Natural killer cell (primary cell): ENCODE measurements at regions of chr12 and their contacts with region 1.

Region 1: DNA sequence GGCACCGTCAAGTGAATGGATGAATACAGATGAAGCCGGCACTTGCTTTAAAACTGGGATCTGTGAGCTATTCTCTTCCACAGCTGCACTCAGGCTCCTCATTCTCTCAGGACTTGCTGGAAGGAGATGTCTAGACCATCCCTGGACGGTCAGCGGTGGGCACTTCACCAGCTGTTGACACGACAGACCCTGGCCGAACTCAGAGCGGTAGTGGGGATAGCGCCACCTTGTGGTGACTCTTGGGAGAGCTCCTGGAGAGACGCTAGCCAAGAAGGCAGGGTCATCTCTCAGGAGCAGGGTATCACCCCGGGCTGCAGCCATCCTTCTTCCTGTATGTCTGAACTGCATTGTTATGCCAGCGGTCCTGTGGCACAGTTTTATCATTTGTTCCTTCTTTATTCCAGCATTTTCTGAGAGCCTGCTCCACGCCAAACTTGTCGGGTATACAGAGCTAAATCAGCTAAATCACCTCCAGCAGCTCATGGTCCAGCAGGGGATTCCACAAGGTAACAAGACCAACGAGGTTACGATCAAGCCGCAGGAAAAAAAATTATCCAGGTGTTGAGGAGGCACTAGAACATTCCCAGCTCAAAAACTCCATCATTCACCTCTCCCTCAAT is 10.0 kb downstream of the WNT1 start:
- DNase-seq: peak; percentile 77 to 86
- ATAC-seq: peak; percentile 86 to 97 (median 90)
- H3K4me3 ChIP-seq: no peak overlapping the region
- H3K4me3 Mint-ChIP-seq: no peak overlapping the region
- H3K27ac ChIP-seq: no peak overlapping the region
- H3K27ac Mint-ChIP-seq: no peak overlapping the region
- H3K4me1 ChIP-seq: peaks cover 5% of the 10 kb centered on the region
- H3K4me1 Mint-ChIP-seq: peaks cover 5 to 8% of the 10 kb centered on the region in 2 donors
- H3K27me3 ChIP-seq: peaks cover 7% of the 10 kb centered on the region
- H3K27me3 Mint-ChIP-seq: peaks cover 35% of the 10 kb centered on the region in 2 donors
- CTCF ChIP-seq: peak; percentile 87

Region 2: GRCh38 chr12:48903982-48904411 is 84.1 kb before region 1 on chr12:
- intact Hi-C with region 1: loop called (anchors 5 kb)
- DNase-seq: peak; percentile 74 to 93
- ATAC-seq: peak; percentile 95 to 100 (median 99)
- H3K4me3 ChIP-seq: peak overlapping the region; percentile 9
- H3K4me3 Mint-ChIP-seq: peak overlapping the region; percentile 56
- H3K27ac ChIP-seq: no peak overlapping the region
- H3K27ac Mint-ChIP-seq: peak overlapping the region in 1 of 2 donors; percentile 83
- H3K4me1 ChIP-seq: peaks cover 14% of the 10 kb centered on the region
- H3K4me1 Mint-ChIP-seq: peaks cover 6 to 11% of the 10 kb centered on the region in 2 donors
- H3K27me3 ChIP-seq: no peaks in the 10 kb centered on the region
- H3K27me3 Mint-ChIP-seq: no peaks in the 10 kb centered on the region
- CTCF ChIP-seq: peak; percentile 84

Region 3: GRCh38 chr12:48954841-48955501 is 33.2 kb before region 1 on chr12:
- intact Hi-C with region 1: no loop called
- DNase-seq: no peak
- ATAC-seq: no peak
- H3K4me3 ChIP-seq: no peak overlapping the region
- H3K4me3 Mint-ChIP-seq: peak overlapping the region; percentile 90
- H3K27ac ChIP-seq: no peak overlapping the region
- H3K27ac Mint-ChIP-seq: peak overlapping the region; percentile 73 to 97
- H3K4me1 ChIP-seq: peaks cover 17% of the 10 kb centered on the region
- H3K4me1 Mint-ChIP-seq: peaks cover 44 to 45% of the 10 kb centered on the region in 2 donors
- H3K27me3 ChIP-seq: no peaks in the 10 kb centered on the region
- H3K27me3 Mint-ChIP-seq: peaks cover 0 to 3% of the 10 kb centered on the region in 2 donors
- CTCF ChIP-seq: no peak